Activated T-helper 2 cell treated with anti-CD3 and anti-CD28 coated beads, Interferon-gamma antibody, Interleukin-2, Interleukin-4, amounts not matched to agents 10 μg/mL and 5 μg/mL and 100 μg/mL, durations not matched to agents 14 hours and 24 hours and 36 hours (primary cell): ENCODE measurements at regions of chr10 and their contacts with region 1.

Region 1: DNA sequence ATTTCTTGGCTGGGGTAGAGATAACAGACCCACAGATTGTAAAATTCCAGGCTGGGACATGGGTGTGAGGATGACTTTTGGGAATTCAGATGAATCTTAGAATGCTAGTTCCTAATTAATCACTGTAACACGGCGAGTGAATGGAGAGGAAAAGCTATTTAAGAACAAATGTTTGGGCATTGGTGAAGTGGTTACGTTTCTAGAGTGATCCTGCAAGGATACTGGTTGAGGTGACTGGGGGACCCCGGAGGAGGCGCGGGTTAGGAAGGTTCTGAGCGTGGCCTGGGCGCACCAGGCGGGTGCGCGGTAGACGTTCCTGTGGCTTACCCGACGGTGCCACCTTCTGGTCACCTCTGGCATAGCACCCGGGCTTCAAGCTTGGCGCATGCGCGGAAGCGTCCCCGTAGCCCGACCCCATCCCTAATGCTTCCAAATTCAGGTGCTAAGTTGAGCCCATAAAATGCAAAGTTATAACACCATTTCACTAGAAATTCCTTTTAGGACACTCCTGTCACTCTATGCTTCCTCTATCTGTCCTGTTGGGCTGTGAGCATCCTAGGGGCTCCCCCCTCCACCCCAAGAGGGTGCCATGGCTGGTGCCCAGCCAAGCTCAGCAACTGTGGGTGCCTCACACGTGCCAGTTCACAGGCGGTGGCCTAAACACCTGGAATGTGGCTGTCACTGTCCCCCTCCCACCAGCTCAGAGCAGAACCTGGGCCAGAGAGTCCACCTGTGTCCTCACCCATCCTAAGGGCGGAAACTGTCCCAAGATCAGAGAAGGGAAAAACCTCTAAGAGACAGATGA is 104.5 kb downstream of the PTPRE start:
- DNase-seq: peak; percentile 77
- H3K4me3 Mint-ChIP-seq: peak overlapping the region; percentile 17
- H3K27ac Mint-ChIP-seq: no peak overlapping the region
- H3K4me1 Mint-ChIP-seq: peaks cover 8% of the 10 kb centered on the region
- H3K27me3 Mint-ChIP-seq: peaks cover 7% of the 10 kb centered on the region

Region 2: GRCh38 chr10:127906548-127907377 is 104.6 kb before region 1 on chr10 and contains the start of gene PTPRE:
- intact Hi-C with region 1: loop called (anchors 1 kb)
- DNase-seq: peak; percentile 48
- H3K4me3 Mint-ChIP-seq: no peak within 1 kb of the TSS
- H3K27ac Mint-ChIP-seq: no peak within 1 kb of the TSS
- H3K4me1 Mint-ChIP-seq: no peaks in the 10 kb centered on the region
- H3K27me3 Mint-ChIP-seq: peaks cover 40% of the 10 kb centered on the region
- total RNA-seq, gene PTPRE: 16.8 and 17.0 TPM in 2 replicates